ENCODE measurements at regions of chr1 and their contacts with region 1.

Region 1: DNA sequence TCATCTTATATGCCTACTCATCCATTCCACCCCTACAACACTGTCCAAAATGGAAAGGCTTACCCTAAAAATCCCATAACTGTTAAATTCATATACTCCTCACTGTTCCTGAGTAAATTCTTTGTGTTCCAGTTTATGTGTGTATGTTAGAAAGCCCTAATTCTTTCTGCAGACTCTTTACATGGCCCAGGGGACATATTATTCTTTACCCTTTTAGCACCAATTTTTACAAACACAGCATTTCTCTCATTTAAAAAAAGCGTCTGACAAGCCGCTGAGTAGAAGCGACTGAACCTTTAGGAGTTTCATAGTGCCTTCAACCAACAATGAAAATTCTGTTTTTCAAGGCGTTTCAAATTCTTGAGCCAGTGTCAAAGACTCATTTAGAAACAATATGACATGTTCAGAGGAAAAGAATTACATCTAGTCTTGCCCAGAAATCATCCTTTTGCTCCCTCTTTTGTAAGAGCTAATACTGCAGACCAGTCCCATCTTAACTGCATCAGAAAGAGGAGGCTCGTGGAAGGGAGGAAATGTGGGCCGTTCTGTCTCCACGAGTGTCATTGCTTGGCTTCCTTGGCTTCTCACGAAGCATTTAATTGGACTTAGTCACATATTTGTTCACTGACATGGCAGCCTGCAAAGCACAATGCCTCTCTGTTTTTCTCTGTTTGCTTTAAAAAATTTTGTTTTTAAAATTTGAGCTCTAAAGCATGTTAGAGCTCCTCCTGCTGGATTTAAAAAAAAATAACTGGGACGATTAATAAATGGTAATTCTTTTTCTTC is 21.3 kb upstream of the C1orf105 start:
- DNase-seq: no peak
- H3K4me3 ChIP-seq: no peak overlapping the region
- H3K4me3 Mint-ChIP-seq: no peak overlapping the region
- H3K27ac ChIP-seq: no peak overlapping the region
- H3K27ac Mint-ChIP-seq: no peak overlapping the region
- H3K4me1 ChIP-seq: no peaks in the 10 kb centered on the region
- H3K4me1 Mint-ChIP-seq: peaks cover 14% of the 10 kb centered on the region
- H3K27me3 ChIP-seq: no peaks in the 10 kb centered on the region
- H3K27me3 Mint-ChIP-seq: peaks cover 0 to 3% (median 0%) of the 10 kb centered on the region in 3 donors
- CTCF ChIP-seq: peak; percentile 62

Region 2: GRCh38 chr1:171801487-171801891 is 597.7 kb before region 1 on chr1:
- intact Hi-C with region 1: loop called in 1 of 2 experiments (anchors 5 kb)
- DNase-seq: peak in 2 of 3 donors; percentile 18 to 21
- H3K4me3 ChIP-seq: no peak overlapping the region
- H3K4me3 Mint-ChIP-seq: no peak overlapping the region
- H3K27ac ChIP-seq: no peak overlapping the region
- H3K27ac Mint-ChIP-seq: no peak overlapping the region
- H3K4me1 ChIP-seq: peaks cover 9 to 12% of the 10 kb centered on the region in 2 donors
- H3K4me1 Mint-ChIP-seq: peaks cover 37% of the 10 kb centered on the region
- H3K27me3 ChIP-seq: no peaks in the 10 kb centered on the region
- H3K27me3 Mint-ChIP-seq: peaks cover 0 to 2% (median 0%) of the 10 kb centered on the region in 3 donors
- CTCF ChIP-seq: peak; percentile 70

Region 3: DNA sequence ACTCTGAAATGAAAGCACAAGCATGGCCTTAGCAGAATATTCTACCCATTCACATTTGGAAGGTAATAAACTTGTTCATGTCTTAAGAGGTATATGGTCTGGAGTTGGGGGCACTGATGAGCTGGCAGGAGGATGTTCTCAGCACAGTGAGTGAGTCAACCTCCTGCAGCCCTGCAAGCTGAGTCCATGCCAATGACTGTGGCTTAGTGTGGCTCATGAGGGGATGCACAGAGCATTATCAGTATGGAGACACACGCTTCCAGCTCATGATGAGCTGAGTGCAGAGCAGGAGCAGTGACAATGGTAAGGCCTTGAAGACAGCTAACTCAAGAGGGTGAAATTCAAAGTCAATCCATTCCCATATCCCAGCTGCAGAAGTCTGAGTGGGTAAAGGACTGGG is 549.3 kb after region 1 on chr1:
- intact Hi-C with region 1: no loop called
- DNase-seq: peak in 1 of 3 donors; percentile 46
- H3K4me3 ChIP-seq: no peak overlapping the region
- H3K4me3 Mint-ChIP-seq: no peak overlapping the region
- H3K27ac ChIP-seq: no peak overlapping the region
- H3K27ac Mint-ChIP-seq: no peak overlapping the region
- H3K4me1 ChIP-seq: no peaks in the 10 kb centered on the region
- H3K4me1 Mint-ChIP-seq: peaks cover 4% of the 10 kb centered on the region
- H3K27me3 ChIP-seq: no peaks in the 10 kb centered on the region
- H3K27me3 Mint-ChIP-seq: peaks cover 0 to 2% (median 0%) of the 10 kb centered on the region in 3 donors
- CTCF ChIP-seq: no peak

Measured in CD14-positive monocyte (primary cell).